ENCODE measurements at regions of chr2 and their contacts with region 1.

Region 1: DNA sequence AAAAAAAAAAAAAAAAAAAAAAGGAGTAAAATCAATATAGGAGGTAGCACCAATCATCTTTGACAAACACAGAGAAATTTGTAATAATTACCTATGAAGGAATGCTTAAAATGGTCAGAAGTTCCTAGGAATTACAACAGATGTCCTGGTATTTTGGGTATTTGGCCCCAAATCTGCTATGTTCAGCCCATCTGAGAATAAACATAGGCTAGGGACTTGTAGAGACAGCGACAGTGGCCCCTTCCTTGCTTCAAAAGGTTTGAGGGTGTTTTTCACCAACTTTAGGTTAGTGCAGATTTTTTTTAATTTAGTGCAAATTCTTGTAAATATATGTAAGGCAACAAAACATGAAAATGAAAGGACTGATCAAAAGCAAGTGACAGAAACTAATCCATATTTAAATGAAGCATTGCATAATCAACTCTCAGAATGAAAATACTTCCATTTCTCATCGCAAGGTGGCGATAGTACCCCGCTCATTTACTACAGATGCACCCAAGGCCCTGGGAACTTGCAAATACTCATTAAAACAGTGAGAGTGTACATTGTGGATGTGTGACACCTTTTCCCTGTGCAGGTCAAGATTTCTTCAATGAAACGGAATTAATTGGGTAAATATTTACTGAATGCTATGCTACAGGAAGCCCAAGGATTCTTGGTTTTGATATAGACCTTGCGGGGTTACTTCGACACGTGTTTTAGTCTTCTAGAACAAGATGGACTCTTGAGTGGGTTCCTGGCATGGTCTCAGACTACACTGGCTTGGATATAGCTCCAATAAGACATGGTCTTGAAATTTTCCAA is 44.6 kb downstream of the FAM124B start:
- DNase-seq: peak; percentile 75
- H3K4me3 ChIP-seq: no peak overlapping the region
- H3K27ac ChIP-seq: no peak overlapping the region
- H3K4me1 ChIP-seq: peaks cover 8% of the 10 kb centered on the region
- CTCF ChIP-seq: peak; percentile 93

Region 2: GRCh38 chr2:224449212-224450147 is 92.2 kb after region 1 on chr2:
- CTCF ChIA-PET with region 1: no interaction called
- POLR2A ChIA-PET with region 1: interaction called, 3 read pairs
- intact Hi-C with region 1: loop called (anchors 5 kb)
- DNase-seq: peak; percentile 47
- H3K4me3 ChIP-seq: no peak overlapping the region
- H3K27ac ChIP-seq: no peak overlapping the region
- H3K4me1 ChIP-seq: peaks cover 4% of the 10 kb centered on the region
- CTCF ChIP-seq: peak; percentile 87

Region 3: DNA sequence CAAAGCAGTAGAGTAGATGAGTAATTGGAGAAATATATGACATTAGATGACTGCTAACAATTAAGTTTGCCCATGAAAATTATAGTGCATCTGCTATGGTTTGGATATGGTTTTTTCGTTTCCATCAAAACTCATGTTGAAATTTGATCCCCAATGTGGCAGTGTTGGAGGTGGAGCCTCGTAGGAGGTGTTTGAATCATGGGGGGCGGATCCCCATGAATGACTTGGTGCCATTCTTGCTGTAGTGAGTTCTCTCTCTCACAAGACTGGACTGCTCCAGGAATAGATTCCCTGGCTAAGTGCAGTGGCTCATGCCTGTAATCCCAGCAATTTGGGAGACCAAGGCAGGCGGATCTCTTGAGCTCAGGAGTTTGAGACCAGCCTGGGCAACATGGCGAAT is 237.5 kb after region 1 on chr2:
- CTCF ChIA-PET with region 1: no interaction called
- POLR2A ChIA-PET with region 1: interaction called, 3 read pairs
- intact Hi-C with region 1: loop called (anchors 5 kb)
- DNase-seq: no peak
- H3K4me3 ChIP-seq: no peak overlapping the region
- H3K27ac ChIP-seq: no peak overlapping the region
- H3K4me1 ChIP-seq: peaks cover 26% of the 10 kb centered on the region
- CTCF ChIP-seq: no peak

Region 4: DNA sequence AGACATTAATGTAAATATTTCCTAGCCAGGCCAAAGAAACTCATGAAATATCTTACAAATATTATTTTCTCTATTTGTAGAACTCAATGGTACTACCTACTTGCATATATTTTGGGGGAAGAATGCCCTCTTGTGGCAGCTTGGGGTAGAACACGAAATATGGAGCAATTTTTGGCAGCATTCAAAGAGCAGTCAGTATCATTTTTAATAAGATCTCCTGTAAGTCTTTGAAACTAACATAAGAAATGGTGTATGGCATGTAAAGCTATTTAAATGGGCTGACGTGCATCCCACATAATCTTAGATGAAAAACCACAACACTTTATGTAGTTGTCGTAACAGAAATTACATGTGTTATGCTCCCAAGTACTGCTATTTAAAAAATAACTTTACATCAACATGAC is 421.2 kb after region 1 on chr2:
- CTCF ChIA-PET with region 1: no interaction called
- POLR2A ChIA-PET with region 1: interaction called, 3 read pairs
- intact Hi-C with region 1: loop called (anchors 2 kb)
- DNase-seq: peak; percentile 73
- H3K4me3 ChIP-seq: no peak overlapping the region
- H3K27ac ChIP-seq: peak overlapping the region; percentile 0
- H3K4me1 ChIP-seq: peaks cover 31% of the 10 kb centered on the region
- CTCF ChIP-seq: peak; percentile 99